CD4-positive, alpha-beta T cell (primary cell): ENCODE measurements at regions of chr6 and their contacts with region 1.

Region 1: DNA sequence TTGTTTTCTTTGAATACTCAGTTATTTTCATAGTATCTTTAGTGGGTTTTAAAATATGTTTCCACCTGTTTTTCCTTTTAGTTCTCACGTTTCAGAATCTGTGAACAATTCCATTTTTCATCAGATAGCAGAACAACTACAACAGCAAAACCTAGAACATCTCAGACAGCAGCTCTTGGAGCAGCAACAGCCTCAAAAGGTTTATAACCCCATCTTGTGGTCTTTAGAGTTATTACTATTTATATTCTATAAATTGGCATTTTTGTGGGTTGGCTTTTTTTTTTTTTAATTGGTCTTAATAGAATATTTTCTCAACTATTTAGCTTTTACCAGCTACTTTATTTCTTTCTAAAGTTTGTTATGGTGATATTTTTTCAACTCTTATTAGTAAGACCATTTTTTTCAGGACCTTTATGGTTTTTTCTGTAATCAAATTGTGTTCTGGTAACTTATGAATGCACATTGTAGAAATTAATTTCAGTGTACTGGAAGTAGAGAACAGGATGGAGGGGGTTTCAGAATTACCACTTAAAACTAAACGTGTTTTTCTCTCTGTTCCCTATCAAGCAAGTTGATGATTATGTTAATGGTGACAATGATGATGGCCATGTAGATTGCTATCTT is 72.2 kb downstream of the SCAF8 start:
- DNase-seq: peak in 4 of 14 experiments; percentile 12 to 65 (median 60)
- ATAC-seq: peak; percentile 88
- H3K4me3 ChIP-seq: no peak overlapping the region
- H3K4me3 Mint-ChIP-seq: no peak overlapping the region
- H3K27ac ChIP-seq: no peak overlapping the region
- H3K27ac Mint-ChIP-seq: peak overlapping the region; percentile 10
- H3K4me1 ChIP-seq: no peaks in the 10 kb centered on the region
- H3K4me1 Mint-ChIP-seq: peaks cover 6% of the 10 kb centered on the region
- H3K27me3 ChIP-seq: no peaks in the 10 kb centered on the region
- H3K27me3 Mint-ChIP-seq: no peaks in the 10 kb centered on the region
- CTCF ChIP-seq: peak; percentile 72

Region 2: DNA sequence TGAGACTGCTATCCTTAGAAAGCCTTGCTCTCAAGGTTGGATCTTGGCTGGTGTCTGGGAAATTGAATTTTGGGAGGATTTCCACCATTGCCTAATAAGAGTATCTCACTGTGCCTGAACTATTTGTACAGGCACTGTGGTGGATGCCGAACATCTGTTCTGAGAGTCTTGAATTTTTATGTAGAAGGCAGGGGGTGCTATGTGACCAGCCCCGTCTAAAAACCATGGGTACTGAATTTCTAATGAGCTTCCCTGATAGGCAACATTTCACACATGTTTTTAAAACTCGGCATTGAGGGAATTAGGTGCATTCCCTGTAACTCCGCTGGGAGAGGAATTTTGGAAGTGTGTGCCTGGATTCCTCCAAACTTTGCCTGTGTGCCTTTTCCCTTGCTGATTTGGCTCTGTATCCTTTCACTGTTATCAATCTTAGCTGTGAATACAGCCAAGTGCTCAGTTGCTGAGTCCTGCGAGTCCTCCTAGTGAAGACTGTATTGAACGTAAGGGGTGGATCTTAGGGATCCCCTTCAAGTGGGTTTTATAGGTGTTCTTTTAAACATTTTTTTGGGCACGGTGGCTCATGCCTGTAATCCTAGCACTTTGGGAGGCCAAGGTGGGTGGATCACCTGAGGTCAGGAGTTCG is 99.8 kb before region 1 on chr6:
- CTCF ChIA-PET with region 1: interaction called, 5 read pairs
- POLR2A ChIA-PET with region 1: no interaction called
- intact Hi-C with region 1: loop called in 1 of 2 experiments (anchors 1 kb)
- DNase-seq: peak in 4 of 14 experiments; percentile 6 to 32 (median 14)
- ATAC-seq: no peak
- H3K4me3 ChIP-seq: no peak overlapping the region
- H3K4me3 Mint-ChIP-seq: no peak overlapping the region
- H3K27ac ChIP-seq: no peak overlapping the region
- H3K27ac Mint-ChIP-seq: no peak overlapping the region
- H3K4me1 ChIP-seq: no peaks in the 10 kb centered on the region
- H3K4me1 Mint-ChIP-seq: no peaks in the 10 kb centered on the region
- H3K27me3 ChIP-seq: no peaks in the 10 kb centered on the region
- H3K27me3 Mint-ChIP-seq: peaks cover 10% of the 10 kb centered on the region
- CTCF ChIP-seq: no peak

Region 3: DNA sequence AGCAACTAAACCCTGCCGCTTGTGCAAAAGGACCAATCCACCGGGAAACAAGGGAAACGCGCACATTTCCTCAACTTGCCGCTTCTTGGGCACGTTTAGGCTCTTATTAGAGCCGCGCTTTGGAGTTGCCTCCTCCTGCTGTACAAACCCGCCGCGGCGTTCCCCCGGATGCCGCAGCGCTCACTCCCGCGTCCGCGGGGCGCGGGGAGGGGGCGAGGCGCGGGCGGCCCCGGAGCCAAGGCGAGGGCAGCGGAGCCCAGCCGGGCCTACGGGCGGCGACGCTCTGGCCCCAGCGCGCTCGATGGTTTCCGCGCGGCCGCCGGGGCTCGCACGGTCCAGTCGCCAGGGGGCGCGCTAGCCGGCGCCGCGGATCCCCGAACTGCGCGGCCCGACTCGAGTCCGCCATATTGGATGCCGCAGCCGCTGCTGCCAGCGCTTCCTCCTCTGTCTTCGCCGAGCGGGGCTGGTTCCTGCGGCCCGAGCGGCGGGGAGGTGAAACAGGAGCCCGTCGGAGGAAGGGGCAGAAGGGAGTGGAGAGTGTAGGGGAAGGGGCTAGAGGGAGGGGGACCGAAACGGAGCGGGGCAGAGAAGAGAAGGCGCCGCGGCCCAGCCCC is 72.3 kb before region 1 on chr6 and contains the start of gene SCAF8:
- CTCF ChIA-PET with region 1: no interaction called
- POLR2A ChIA-PET with region 1: no interaction called
- intact Hi-C with region 1: loop called (anchors 1 to 2 kb)
- DNase-seq: peak; percentile 70 to 95 (median 83)
- ATAC-seq: peak; percentile 65
- H3K4me3 ChIP-seq: peak within 1 kb of the TSS; percentile 87
- H3K4me3 Mint-ChIP-seq: peak within 1 kb of the TSS; percentile 95
- H3K27ac ChIP-seq: peak within 1 kb of the TSS; percentile 95 to 98
- H3K27ac Mint-ChIP-seq: peak within 1 kb of the TSS; percentile 86
- H3K4me1 ChIP-seq: peaks cover 41% of the 10 kb centered on the region
- H3K4me1 Mint-ChIP-seq: peaks cover 36% of the 10 kb centered on the region
- H3K27me3 ChIP-seq: no peaks in the 10 kb centered on the region
- H3K27me3 Mint-ChIP-seq: no peaks in the 10 kb centered on the region
- CTCF ChIP-seq: peak; percentile 69
- total RNA-seq, gene SCAF8: 82.6 to 83.8 TPM

Region 4: DNA sequence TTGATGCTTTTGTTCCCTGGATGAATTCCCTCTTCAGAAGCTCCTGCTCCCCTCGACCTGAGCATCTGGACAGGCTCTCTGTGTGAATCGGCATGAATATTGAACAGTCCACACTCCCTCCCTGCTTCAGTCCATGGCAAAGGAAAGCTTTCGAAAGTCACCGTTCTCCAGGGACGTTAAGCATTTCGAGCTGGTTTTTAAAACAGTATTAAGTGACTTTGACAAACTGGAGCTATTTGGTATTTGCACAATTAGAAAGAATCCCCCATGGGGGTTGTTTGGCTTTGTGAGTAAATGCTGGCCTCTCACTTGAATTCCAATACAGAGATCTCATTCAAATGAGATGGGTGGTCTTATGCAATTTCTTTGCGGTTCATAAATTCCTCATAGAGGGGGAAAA is 104.4 kb after region 1 on chr6:
- CTCF ChIA-PET with region 1: no interaction called
- POLR2A ChIA-PET with region 1: no interaction called
- intact Hi-C with region 1: no loop called
- DNase-seq: no peak
- ATAC-seq: no peak
- H3K4me3 ChIP-seq: no peak overlapping the region
- H3K4me3 Mint-ChIP-seq: no peak overlapping the region
- H3K27ac ChIP-seq: no peak overlapping the region
- H3K27ac Mint-ChIP-seq: no peak overlapping the region
- H3K4me1 ChIP-seq: no peaks in the 10 kb centered on the region
- H3K4me1 Mint-ChIP-seq: no peaks in the 10 kb centered on the region
- H3K27me3 ChIP-seq: no peaks in the 10 kb centered on the region
- H3K27me3 Mint-ChIP-seq: no peaks in the 10 kb centered on the region
- CTCF ChIP-seq: no peak

Region 5: GRCh38 chr6:156437121-156437879 is 1631.9 kb after region 1 on chr6:
- CTCF ChIA-PET with region 1: no interaction called
- POLR2A ChIA-PET with region 1: no interaction called
- intact Hi-C with region 1: no loop called
- DNase-seq: no peak
- ATAC-seq: no peak
- H3K4me3 ChIP-seq: no peak overlapping the region
- H3K4me3 Mint-ChIP-seq: no peak overlapping the region
- H3K27ac ChIP-seq: no peak overlapping the region
- H3K27ac Mint-ChIP-seq: no peak overlapping the region
- H3K4me1 ChIP-seq: no peaks in the 10 kb centered on the region
- H3K4me1 Mint-ChIP-seq: no peaks in the 10 kb centered on the region
- H3K27me3 ChIP-seq: no peaks in the 10 kb centered on the region
- H3K27me3 Mint-ChIP-seq: no peaks in the 10 kb centered on the region
- CTCF ChIP-seq: no peak